Testis (tissue), 5 donors: ENCODE measurements at regions of chr19 and their contacts with region 1.

Region 1: DNA sequence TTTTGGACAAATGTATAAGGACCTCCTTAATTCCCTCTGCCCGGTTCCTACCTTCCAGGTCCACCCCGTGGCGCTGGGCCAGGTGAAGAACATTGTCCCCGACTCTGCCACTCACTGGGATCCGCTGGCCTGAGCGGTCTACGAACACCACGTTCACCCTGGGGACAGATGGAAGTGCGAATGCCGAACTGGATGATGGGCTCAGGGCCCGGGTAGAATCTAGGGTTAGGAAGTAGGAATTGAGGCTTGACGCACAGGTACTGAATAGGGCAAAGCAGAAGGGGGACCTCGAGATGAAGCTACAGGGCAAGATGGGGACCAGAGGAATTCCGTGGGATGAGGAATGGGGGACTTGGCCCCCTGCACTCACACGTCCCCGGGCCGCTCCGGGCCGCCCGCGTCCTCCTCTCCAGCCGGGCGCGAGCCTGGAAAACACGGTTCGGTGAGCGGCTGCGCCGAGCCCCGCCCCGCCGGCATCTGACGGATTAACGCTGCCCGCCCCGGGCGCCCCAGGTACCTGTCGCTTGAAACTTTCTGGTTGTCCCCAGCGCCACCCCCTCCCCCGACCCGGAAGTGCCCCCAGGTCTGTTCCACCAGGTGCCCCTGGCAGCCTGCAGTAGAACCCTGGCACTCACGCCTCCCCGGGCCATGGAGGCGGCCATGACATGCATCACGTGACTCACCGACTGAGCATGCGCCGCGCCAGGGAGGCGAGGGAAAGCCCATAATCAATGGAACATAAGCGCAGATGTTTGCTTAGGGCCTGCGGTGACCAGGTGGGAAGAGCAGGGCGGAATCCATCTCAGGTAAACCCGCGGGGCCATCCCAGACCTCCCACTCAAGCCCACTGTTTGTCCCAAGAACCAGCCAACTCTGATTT is at the start of gene FDX2:
- DNase-seq: peak; percentile 92
- H3K4me3 ChIP-seq: peak within 1 kb of the TSS; percentile 71 to 96
- H3K27ac ChIP-seq: peak within 1 kb of the TSS; percentile 70 to 76
- H3K4me1 ChIP-seq: peaks cover 14% of the 10 kb centered on the region
- H3K27me3 ChIP-seq: no peaks in the 10 kb centered on the region
- CTCF ChIP-seq: peak in 1 of 3 experiments; percentile 16
- POLR2A ChIP-seq: no peak
- total RNA-seq, gene FDX2: 35.7 to 40.2 TPM

Region 2: DNA sequence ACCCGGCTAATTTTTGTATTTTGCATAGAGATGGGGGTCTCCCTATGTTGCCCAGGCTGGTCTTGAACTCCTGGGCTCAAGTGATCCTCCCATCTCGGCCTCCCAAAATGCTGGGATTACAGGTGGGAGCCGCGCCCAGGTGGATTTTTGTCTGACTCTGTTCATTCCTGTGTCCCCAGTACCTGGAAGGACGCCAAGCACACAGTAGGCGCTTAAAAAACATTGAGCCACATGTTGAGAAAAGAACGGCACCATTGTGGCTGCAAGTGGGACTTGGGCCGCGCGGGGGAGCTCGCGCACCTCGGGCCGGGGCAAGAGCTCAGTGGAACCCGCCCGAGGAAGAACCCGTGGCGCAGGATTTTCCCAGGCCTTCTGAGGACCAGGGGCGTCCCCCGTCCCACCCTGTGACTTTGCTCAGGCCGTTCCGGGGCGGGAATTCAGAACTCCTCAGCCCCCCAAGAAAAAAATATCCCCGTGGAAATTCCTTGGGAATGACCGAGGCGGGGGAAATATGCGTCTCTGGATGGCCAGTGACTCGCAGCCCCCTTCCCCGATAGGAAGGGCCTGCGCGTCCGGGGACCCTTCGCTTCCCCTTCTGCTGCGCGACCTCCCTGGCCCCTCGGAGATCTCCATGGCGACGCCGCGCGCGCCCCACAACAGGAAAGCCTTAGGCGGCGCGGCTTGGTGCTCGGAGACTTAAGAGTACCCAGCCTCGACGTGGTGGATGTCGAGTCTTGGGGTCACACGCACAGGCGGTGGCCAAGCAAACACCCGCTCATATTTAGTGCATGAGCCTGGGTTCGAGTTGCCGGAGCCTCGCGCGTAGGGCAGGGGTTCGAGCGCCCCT is 46.0 kb before region 1 on chr19:
- intact Hi-C with region 1: loop called (anchors 5 kb)
- DNase-seq: peak; percentile 89
- H3K4me3 ChIP-seq: peak overlapping the region; percentile 49 to 60
- H3K27ac ChIP-seq: peak overlapping the region in 1 of 2 donors; percentile 77
- H3K4me1 ChIP-seq: peaks cover 13% of the 10 kb centered on the region
- H3K27me3 ChIP-seq: no peaks in the 10 kb centered on the region
- CTCF ChIP-seq: peak; percentile 86 to 93 (median 88)
- POLR2A ChIP-seq: no peak